ENCODE measurements at regions of chr18 and their contacts with region 1.

Region 1: DNA sequence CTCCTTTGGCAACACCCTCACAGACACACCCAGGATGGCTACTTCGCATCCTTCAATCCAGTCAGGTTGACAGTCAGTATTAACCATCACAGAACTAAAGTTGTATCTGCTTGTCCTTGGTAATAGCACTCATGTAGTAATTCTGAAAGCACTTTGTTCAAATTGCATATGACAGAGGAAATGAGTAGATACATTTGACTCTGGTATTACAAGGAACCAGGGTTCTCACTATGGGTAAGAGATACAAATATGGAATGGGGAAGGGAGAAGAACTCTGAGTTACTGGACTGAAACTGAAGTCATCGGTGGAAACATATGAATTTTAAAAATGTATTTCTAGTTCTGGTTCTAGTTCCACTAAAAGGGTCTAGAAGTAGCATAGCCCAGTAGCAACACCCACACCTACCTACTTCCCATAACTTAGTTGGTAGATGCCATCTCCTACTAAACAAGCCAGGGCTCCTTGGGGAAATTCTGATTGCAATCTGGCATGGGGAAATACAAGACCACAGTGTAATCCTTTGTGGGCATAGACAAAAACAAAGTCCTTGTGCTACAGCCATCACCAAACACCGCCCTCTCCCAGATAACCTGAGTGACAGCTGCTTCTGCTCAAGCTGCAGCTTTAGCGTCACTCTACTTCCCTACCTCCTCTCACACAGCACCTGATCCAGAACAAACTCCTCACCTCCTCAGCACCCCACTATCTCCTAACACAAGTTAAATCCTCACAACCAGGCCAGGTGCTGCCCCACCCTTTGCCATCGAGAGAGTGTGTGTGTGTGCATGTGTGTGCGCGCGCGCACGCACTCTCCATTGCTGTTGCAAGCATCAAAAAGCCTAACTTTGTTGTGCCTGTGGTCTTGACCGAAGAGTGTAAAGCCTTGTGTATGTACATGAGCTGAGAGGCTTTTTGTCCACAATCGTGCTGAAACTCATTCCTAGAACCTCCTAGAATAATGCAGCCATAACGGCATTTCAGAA is 31.4 kb upstream of the CD226 start:
- DNase-seq: no peak
- H3K4me3 Mint-ChIP-seq: peak overlapping the region; percentile 40
- H3K27ac Mint-ChIP-seq: peak overlapping the region; percentile 74
- H3K4me1 Mint-ChIP-seq: peaks cover 50% of the 10 kb centered on the region
- H3K27me3 Mint-ChIP-seq: no peaks in the 10 kb centered on the region

Region 2: GRCh38 chr18:69774831-69775230 is 204.2 kb before region 1 on chr18:
- intact Hi-C with region 1: no loop called
- DNase-seq: no peak
- H3K4me3 Mint-ChIP-seq: no peak overlapping the region
- H3K27ac Mint-ChIP-seq: no peak overlapping the region
- H3K4me1 Mint-ChIP-seq: peaks cover 6% of the 10 kb centered on the region
- H3K27me3 Mint-ChIP-seq: no peaks in the 10 kb centered on the region

Region 3: DNA sequence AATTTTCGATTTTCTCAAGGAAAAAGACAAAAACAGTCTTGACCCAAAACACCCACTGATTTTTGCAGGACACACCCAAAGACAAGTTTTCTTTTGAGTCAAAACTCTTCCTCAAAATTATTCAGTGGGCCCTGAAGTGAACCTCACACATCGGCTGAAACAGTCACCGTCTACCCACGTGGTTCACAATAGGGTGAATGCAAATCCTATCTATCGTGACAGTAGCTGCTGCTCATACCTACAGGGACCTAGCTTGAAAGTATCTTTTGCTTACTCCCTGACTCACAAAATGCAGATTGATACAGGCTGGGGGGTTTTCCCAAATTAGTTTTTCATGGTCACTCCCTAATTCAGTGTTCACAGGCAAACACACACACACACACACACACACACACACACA is 20.6 kb before region 1 on chr18:
- intact Hi-C with region 1: loop called (anchors 1 kb)
- DNase-seq: no peak
- H3K4me3 Mint-ChIP-seq: no peak overlapping the region
- H3K27ac Mint-ChIP-seq: no peak overlapping the region
- H3K4me1 Mint-ChIP-seq: peaks cover 16% of the 10 kb centered on the region
- H3K27me3 Mint-ChIP-seq: peaks cover 1% of the 10 kb centered on the region

Region 4: DNA sequence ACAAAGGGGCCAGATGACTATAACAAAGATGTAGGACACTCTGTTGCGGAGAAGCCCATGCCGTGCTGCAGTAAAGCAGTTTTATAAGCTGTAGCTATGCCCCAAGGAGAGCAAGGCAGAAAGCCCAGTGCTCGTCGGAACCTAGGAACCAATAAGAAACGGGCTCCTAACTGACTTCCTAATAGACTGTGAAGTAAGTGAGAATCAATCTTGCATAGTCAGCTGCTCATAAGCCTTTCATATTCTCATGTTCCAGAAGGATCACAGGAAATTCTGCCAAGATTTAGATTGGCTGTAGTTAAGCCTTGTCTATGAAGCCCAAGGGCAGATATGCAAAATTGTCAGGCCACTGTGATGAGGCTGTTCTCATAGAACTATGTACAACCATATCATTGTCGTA is 128.1 kb after region 1 on chr18:
- intact Hi-C with region 1: no loop called
- DNase-seq: no peak
- H3K4me3 Mint-ChIP-seq: no peak overlapping the region
- H3K27ac Mint-ChIP-seq: no peak overlapping the region
- H3K4me1 Mint-ChIP-seq: no peaks in the 10 kb centered on the region
- H3K27me3 Mint-ChIP-seq: no peaks in the 10 kb centered on the region

Region 5: DNA sequence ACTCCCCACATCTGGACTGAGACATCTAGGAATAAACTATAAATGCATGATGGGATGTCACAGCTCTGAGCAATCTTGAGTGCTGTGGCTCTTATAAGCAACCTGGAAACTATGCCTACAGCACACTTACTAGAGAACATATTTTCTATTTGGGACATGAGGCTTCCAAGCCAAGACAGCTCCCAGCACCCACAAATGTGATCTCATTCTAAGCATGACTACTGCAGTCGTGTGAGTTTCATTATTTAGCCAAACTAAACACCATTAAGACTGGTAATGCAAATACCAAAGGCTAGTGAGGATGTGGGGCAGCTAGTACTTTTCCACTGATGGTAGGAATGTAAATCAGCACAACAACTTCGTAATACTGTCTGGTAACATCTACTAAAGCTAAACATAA is 154.0 kb after region 1 on chr18:
- intact Hi-C with region 1: no loop called
- DNase-seq: no peak
- H3K4me3 Mint-ChIP-seq: no peak overlapping the region
- H3K27ac Mint-ChIP-seq: no peak overlapping the region
- H3K4me1 Mint-ChIP-seq: no peaks in the 10 kb centered on the region
- H3K27me3 Mint-ChIP-seq: no peaks in the 10 kb centered on the region

Measured in activated T-helper 1 cell treated with anti-CD3 and anti-CD28 coated beads, Interleukin-12 subunit alpha, Interleukin-12 subunit beta, Interleukin-2, Interleukin-4 antibody, amounts not matched to agents 30 ng/mL and 10 ng/mL and 1 ng/mL, durations not matched to agents 14 hours and 24 hours and 36 hours (primary cell).